ENCODE measurements at regions of chr11 and their contacts with region 1.

Region 1: GRCh38 chr11:35391922-35392813 is 27.2 kb downstream of the SLC1A2 start:
- DNase-seq: peak; percentile 91 to 96
- ATAC-seq: peak; percentile 92
- H3K4me3 ChIP-seq: peak overlapping the region in 1 of 2 donors; percentile 52
- H3K27ac ChIP-seq: peak overlapping the region; percentile 37 to 87
- H3K4me1 ChIP-seq: peaks cover 0 to 3% of the 10 kb centered on the region in 2 donors
- H3K27me3 ChIP-seq: no peaks in the 10 kb centered on the region

Region 2: DNA sequence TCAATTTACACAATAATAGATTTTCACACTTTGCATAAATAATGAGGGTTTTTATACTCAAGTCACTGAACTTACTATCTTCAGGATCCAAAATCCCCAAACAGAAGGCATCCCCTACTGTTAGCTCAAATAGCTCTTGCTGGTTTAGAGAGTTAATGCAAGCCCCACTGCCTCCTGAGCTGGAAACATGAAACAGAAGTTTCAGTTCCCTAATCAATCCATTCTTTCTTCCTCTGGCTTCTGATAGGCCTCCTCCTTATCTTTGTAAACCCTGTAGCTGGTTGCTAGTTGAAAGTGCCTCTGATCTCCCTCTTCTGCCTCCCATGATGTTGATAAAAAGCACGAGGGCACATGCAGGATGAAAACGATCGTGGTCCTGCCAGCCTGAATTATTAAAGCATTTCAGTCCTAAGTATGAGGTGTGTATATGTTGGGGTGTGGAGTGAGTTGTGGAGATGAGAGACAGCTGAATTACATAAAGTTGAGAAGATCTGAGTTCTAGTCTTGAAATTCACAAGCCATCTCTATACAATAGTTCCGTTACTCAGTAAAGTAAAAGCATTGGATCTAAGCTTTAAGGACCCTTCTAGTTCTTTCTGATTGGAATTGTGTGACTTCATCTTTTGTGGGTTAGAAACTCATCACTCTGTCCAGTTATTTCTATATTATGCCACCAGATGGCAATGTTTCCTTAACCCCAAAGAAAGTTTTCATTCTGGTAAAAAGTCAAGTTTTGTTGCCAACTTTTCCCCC is 806.3 kb before region 1 on chr11:
- intact Hi-C with region 1: loop called (anchors 5 kb)
- DNase-seq: no peak
- ATAC-seq: peak; percentile 64
- H3K4me3 ChIP-seq: peak overlapping the region in 1 of 2 donors; percentile 32
- H3K27ac ChIP-seq: no peak overlapping the region
- H3K4me1 ChIP-seq: no peaks in the 10 kb centered on the region
- H3K27me3 ChIP-seq: peaks cover 0 to 3% of the 10 kb centered on the region in 2 donors

Region 3: GRCh38 chr11:34926101-34926830 is 465.9 kb before region 1 on chr11:
- intact Hi-C with region 1: loop called (anchors 1 to 2 kb)
- DNase-seq: no peak
- ATAC-seq: no peak
- H3K4me3 ChIP-seq: no peak overlapping the region
- H3K27ac ChIP-seq: no peak overlapping the region
- H3K4me1 ChIP-seq: peaks cover 2 to 7% of the 10 kb centered on the region in 2 donors
- H3K27me3 ChIP-seq: no peaks in the 10 kb centered on the region

Region 4: GRCh38 chr11:34997952-34998528 is 394.1 kb before region 1 on chr11:
- intact Hi-C with region 1: loop called (anchors 1 to 5 kb)
- DNase-seq: no peak
- ATAC-seq: peak; percentile 67
- H3K4me3 ChIP-seq: no peak overlapping the region
- H3K27ac ChIP-seq: no peak overlapping the region
- H3K4me1 ChIP-seq: no peaks in the 10 kb centered on the region
- H3K27me3 ChIP-seq: no peaks in the 10 kb centered on the region

Region 5: DNA sequence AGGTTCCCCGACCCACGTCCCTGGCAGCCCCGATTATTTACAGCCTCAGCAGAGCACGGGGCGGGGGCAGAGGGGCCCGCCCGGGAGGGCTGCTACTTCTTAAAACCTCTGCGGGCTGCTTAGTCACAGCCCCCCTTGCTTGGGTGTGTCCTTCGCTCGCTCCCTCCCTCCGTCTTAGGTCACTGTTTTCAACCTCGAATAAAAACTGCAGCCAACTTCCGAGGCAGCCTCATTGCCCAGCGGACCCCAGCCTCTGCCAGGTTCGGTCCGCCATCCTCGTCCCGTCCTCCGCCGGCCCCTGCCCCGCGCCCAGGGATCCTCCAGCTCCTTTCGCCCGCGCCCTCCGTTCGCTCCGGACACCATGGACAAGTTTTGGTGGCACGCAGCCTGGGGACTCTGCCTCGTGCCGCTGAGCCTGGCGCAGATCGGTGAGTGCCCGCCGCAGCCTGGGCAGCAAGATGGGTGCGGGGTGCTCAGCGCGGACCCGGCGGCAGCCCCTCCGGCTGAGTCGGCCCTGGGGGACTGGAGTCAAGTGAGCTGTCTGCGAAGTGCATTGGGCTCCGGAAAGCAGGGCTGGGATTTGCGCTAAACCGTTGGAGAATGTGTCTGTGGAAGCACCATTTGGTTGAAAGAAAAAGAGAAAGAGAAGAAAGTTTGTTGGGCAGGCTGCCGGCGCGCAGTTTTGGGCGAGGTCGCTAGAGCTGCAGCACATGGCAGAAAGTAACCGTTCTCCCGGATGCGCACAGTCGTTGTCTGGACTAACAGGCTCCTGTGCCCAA is 253.0 kb before region 1 on chr11 and contains the start of gene CD44:
- intact Hi-C with region 1: loop called in 1 of 2 experiments (anchors 10 kb)
- DNase-seq: peak; percentile 89 to 90
- ATAC-seq: peak; percentile 85
- H3K4me3 ChIP-seq: peak within 1 kb of the TSS; percentile 73 to 74
- H3K27ac ChIP-seq: peak within 1 kb of the TSS; percentile 79 to 88
- H3K4me1 ChIP-seq: peaks cover 0 to 4% of the 10 kb centered on the region in 2 donors
- H3K27me3 ChIP-seq: no peaks in the 10 kb centered on the region
- total RNA-seq, gene CD44: 321 to 462 TPM

Region 6: GRCh38 chr11:35246745-35247144 is 145.4 kb before region 1 on chr11:
- intact Hi-C with region 1: loop called in 1 of 2 experiments (anchors 5 kb)
- DNase-seq: no peak
- ATAC-seq: peak; percentile 73
- H3K4me3 ChIP-seq: no peak overlapping the region
- H3K27ac ChIP-seq: peak overlapping the region; percentile 98 to 99
- H3K4me1 ChIP-seq: no peaks in the 10 kb centered on the region
- H3K27me3 ChIP-seq: no peaks in the 10 kb centered on the region

Measured in aorta (tissue), 5 donors.